ENCODE measurements at regions of chr5 and their contacts with region 1.

Region 1: DNA sequence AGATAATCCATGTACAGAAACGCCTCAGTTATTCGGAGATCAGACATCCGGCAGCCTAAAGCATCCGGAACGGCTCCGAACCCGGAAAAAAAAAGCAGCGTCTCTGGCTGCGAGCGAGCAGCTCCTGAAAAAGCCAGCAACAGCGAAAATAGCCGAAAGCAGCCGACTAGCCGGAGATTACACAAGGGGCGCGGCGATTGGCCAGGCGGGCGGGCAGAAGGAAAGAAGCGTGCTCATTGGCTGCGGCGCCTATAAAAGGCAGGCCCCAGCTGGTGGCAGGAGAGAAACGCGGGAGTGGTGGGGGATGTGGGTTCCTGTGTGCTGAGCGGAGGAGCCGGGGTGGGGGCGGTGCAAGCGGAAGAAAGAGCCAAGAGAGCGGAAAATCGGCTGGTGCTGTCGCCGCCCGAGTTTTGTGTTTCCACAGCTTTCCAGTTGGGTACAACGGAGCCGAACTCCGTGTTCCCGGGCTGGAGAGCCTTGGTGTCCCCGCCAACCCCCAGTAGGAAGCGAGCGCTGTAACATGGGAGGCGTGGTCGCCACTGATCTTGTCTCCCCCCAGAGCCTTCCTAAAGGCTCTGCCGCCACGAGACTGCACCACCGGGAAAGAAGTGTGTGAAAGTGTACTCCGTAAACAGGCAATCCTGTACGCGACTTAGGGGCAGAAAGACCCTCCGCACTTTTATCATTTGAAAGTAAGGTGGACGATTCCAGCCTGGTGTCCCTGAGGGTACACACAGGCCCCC is at the start of gene ARL15:
- DNase-seq: peak; percentile 99
- H3K4me3 ChIP-seq: peak within 1 kb of the TSS; percentile 69
- H3K27ac ChIP-seq: peak within 1 kb of the TSS; percentile 76
- H3K4me1 ChIP-seq: no peaks in the 10 kb centered on the region
- H3K27me3 ChIP-seq: no peaks in the 10 kb centered on the region
- CTCF ChIP-seq: no peak
- total RNA-seq, gene ARL15: 17.2 and 18.3 TPM in 2 replicates

Region 2: DNA sequence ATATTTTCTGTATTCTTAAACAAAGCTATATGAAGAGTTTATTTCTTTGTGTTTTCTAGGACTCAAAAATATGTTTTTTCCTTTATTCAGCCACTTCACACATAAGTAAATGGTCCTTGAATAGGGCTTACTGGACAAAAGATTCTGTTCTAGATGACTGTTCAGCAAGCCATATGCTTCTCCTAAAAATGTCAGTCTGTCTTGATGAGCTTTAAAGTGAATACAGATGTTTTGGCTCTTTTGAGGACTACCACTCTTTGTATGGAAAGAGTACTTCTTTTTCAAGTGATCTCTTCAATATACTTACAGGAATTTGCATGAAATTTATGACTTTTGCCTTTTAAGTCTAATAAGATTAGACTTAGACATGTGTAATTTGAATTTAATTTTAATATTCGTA is 741.7 kb before region 1 on chr5:
- CTCF ChIA-PET with region 1: no interaction called
- POLR2A ChIA-PET with region 1: no interaction called
- intact Hi-C with region 1: no loop called
- DNase-seq: peak; percentile 70
- H3K4me3 ChIP-seq: peak overlapping the region; percentile 2
- H3K27ac ChIP-seq: no peak overlapping the region
- H3K4me1 ChIP-seq: peaks cover 17% of the 10 kb centered on the region
- H3K27me3 ChIP-seq: no peaks in the 10 kb centered on the region
- CTCF ChIP-seq: no peak

Region 3: GRCh38 chr5:54206580-54207229 is 103.9 kb before region 1 on chr5:
- CTCF ChIA-PET with region 1: no interaction called
- POLR2A ChIA-PET with region 1: no interaction called
- intact Hi-C with region 1: no loop called
- DNase-seq: no peak
- H3K4me3 ChIP-seq: no peak overlapping the region
- H3K27ac ChIP-seq: no peak overlapping the region
- H3K4me1 ChIP-seq: peaks cover 3% of the 10 kb centered on the region
- H3K27me3 ChIP-seq: no peaks in the 10 kb centered on the region
- CTCF ChIP-seq: no peak

Region 4: DNA sequence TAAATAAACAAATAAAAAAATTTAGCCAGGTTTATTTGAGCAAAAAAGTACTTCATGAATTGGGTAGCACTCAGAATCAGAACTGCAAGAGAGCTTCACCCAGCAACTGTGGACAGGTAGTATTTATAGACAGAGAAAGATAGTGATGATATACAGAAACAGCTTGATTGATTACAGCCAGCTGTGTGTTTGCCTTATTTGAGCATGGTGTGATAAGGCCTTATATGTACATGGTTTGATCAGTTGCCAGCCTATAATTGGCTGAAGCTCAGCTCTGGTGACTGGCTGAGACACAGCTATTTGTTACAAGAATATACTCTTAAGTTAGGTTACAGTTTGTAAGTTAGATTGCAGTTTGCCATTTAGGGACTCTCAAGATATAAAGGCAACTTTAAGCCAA is 34.0 kb after region 1 on chr5:
- CTCF ChIA-PET with region 1: no interaction called
- POLR2A ChIA-PET with region 1: interaction called, 10 read pairs
- intact Hi-C with region 1: no loop called
- DNase-seq: no peak
- H3K4me3 ChIP-seq: no peak overlapping the region
- H3K27ac ChIP-seq: no peak overlapping the region
- H3K4me1 ChIP-seq: no peaks in the 10 kb centered on the region
- H3K27me3 ChIP-seq: no peaks in the 10 kb centered on the region
- CTCF ChIP-seq: no peak

Region 5: GRCh38 chr5:54415896-54416601 is 105.4 kb after region 1 on chr5:
- CTCF ChIA-PET with region 1: interaction called, 3 read pairs
- POLR2A ChIA-PET with region 1: no interaction called
- intact Hi-C with region 1: loop called (anchors 1 kb)
- DNase-seq: no peak
- H3K4me3 ChIP-seq: no peak overlapping the region
- H3K27ac ChIP-seq: no peak overlapping the region
- H3K4me1 ChIP-seq: no peaks in the 10 kb centered on the region
- H3K27me3 ChIP-seq: no peaks in the 10 kb centered on the region
- CTCF ChIP-seq: no peak

Region 6: DNA sequence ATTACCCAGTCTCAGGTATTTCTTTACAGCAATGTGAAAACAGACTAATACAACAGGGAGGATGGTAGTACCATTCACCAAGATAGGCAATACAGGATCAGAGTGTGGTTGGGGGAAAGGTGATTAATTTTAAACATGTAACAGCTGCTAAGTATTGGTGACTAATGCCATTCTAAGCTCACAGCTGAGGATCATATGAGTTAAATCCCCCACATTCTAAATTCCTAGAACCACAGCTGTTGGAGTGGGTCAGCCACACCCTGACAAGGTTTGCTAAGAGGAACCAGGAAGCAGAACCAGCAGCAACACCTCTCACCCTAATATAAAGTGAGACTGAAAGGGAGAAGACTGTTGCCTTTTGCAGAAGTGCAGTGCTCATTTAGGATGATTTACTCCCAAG is 169.7 kb after region 1 on chr5:
- CTCF ChIA-PET with region 1: interaction called, 3 read pairs
- POLR2A ChIA-PET with region 1: no interaction called
- intact Hi-C with region 1: loop called (anchors 10 kb)
- DNase-seq: no peak
- H3K4me3 ChIP-seq: no peak overlapping the region
- H3K27ac ChIP-seq: no peak overlapping the region
- H3K4me1 ChIP-seq: no peaks in the 10 kb centered on the region
- H3K27me3 ChIP-seq: no peaks in the 10 kb centered on the region
- CTCF ChIP-seq: no peak